Esophagus muscularis mucosa (tissue), 4 donors: ENCODE measurements at regions of chr5 and their contacts with region 1.

Region 1: DNA sequence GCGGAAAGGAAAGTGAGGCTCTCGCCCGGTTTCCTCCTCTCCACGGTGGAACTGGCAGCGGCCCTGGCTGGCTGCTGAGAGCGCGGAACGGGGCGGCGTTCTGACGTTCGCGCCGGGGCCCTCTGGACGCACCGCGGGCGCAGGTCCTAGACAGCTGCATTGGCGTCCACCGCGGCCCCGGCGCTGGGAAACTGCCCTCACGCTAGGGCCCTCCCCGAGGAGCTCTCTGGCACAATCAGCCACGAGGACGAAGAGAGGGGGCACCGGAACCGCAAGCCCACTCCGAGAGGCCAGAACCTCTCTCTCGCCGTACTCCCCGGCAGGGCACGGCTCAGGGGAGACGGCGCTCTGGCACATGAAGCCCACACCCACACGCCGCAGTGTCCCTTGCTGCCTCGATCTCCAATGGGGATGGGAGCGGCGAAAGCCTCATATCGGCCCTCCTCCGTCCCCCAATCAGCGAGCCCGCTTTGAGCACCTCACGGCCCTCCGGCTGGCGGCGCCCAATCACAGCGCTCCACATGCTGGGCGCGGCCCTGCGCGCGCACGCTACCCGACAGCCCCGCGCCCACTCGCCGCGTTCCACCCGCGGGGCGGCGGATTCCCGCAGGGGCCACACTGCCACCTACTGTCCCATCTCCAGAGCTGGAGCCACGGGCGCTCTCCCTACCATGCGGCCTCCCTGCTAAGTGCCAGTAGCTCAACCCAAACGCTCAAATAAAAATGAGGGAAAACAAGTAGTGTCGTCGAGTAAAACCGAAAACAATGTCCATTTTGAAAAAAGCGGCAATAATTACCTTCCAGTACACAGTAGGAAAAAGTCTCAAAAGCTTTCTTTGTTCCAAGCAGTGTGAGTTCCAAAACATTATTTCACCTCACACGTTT is 11.8 kb downstream of the MRPS27 start:
- DNase-seq: peak; percentile 99
- H3K4me3 ChIP-seq: peak overlapping the region; percentile 63 to 80 (median 69)
- H3K27ac ChIP-seq: peak overlapping the region; percentile 86 to 96 (median 92)
- H3K4me1 ChIP-seq: peaks cover 8 to 29% (median 26%) of the 10 kb centered on the region in 4 donors
- H3K27me3 ChIP-seq: no peaks in the 10 kb centered on the region
- CTCF ChIP-seq: peak; percentile 95
- EP300 ChIP-seq: no peak
- POLR2A ChIP-seq: peak; percentile 64

Region 2: GRCh38 chr5:71782771-71783770 is 525.1 kb before region 1 on chr5:
- intact Hi-C with region 1: loop called (anchors 1 kb)
- DNase-seq: no peak
- H3K4me3 ChIP-seq: peak overlapping the region; percentile 32 to 42 (median 36)
- H3K27ac ChIP-seq: peak overlapping the region; percentile 59 to 80 (median 72)
- H3K4me1 ChIP-seq: peaks cover 4 to 24% (median 21%) of the 10 kb centered on the region in 4 donors
- H3K27me3 ChIP-seq: no peaks in the 10 kb centered on the region
- CTCF ChIP-seq: peak; percentile 82 to 89 (median 83)
- EP300 ChIP-seq: no peak
- POLR2A ChIP-seq: no peak

Region 3: DNA sequence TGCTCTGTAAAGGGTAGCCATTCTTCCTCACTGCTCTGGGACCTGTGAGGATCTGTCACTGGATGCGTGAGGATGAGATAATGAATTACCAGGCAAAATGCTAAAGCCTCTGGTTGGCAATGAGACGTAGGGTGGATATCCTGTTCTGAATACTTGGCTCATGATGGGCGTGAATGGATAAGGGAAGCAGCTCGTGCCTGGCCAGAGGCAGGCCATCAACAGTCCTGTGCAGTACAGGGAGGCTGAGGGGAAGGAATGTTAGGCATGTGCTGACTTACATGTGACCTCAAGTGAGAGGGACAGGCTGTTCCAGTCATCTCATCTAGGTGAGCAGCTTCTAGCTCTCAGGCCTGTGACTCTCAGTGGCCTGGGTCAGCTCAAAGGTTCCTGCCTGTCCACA is 416.4 kb before region 1 on chr5:
- intact Hi-C with region 1: loop called (anchors 10 kb)
- DNase-seq: peak; percentile 87
- H3K4me3 ChIP-seq: no peak overlapping the region
- H3K27ac ChIP-seq: peak overlapping the region; percentile 78 to 81 (median 80)
- H3K4me1 ChIP-seq: peaks cover 11 to 37% (median 28%) of the 10 kb centered on the region in 4 donors
- H3K27me3 ChIP-seq: no peaks in the 10 kb centered on the region
- CTCF ChIP-seq: no peak
- EP300 ChIP-seq: peak; percentile 96
- POLR2A ChIP-seq: no peak

Region 4: DNA sequence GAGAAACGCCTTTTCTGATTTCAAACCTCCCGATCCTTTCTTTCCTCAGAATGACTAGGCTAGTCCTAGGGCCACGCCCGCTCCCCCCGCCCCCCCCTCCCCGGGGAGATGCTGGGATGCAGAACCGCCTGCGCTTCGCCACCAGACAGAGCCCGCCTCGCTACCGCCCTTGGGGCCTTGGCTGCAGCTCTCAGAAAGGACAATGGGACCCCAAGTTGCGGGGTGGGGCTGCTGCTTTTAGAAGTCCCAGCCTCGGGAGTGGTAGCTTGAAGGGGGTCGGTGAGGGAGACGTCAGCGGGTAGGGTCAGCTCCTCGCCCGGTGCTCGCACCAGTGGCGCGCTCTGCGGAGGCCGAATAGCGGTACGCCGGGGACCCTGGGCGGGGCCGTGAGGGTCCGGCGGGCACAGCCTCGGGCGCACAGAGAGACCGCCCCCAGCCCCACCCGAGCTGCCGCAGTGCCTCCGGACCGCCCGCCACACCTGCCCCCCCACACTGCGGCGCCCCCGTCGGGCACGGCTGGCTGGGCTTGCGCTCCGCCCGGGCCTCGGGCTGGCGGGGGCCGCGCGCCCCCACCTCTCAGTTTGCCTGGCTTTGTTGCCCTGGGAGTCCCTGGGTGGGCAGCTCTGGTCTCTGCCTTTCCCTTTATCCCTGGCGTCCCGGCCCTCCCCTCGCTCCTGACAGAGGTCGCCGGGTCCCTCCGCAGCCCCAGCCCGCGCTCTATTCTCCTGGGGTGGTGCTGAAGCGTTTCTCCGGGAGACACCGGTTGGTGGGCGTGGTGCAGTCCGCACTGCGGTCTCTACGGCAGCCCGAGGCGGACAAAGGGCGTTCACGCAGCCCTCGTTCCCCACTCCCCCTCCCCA is 199.8 kb before region 1 on chr5:
- intact Hi-C with region 1: loop called (anchors 2 kb)
- DNase-seq: no peak
- H3K4me3 ChIP-seq: peak overlapping the region; percentile 89 to 90 (median 90)
- H3K27ac ChIP-seq: peak overlapping the region; percentile 90 to 93 (median 91)
- H3K4me1 ChIP-seq: peaks cover 7 to 58% (median 50%) of the 10 kb centered on the region in 4 donors
- H3K27me3 ChIP-seq: peaks cover 0 to 3% (median 0%) of the 10 kb centered on the region in 4 donors
- CTCF ChIP-seq: no peak
- EP300 ChIP-seq: no peak
- POLR2A ChIP-seq: no peak

Region 5: DNA sequence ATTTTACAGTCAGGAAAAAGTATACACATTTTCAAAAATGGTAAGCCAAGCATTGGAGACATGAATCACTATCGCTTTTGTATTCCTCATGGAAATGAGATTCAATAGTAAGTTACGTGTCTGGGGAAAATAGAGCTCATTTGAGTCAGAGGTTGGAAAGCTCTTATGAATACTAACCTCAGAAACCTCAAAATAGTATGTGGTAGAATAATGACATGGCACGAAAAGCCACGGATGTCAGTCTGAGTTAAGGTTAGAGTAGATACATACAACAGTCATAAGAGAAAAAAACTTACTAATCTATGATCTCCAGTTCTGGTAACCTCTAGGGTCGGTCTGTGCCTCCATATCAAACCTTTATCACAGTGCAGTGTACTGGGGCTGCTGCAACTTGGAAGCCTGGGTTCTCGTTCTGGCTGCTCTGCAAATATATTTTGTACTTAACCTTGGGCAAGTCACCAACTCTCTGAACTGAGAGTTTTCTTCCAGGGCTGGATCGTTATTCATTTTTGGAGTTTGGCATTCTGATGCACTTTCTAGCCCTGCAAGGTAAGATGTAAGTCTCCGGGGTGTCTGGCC is 169.2 kb before region 1 on chr5:
- intact Hi-C with region 1: loop called (anchors 5 kb)
- DNase-seq: no peak
- H3K4me3 ChIP-seq: no peak overlapping the region
- H3K27ac ChIP-seq: peak overlapping the region; percentile 80 to 85 (median 84)
- H3K4me1 ChIP-seq: peaks cover 33 to 100% (median 97%) of the 10 kb centered on the region in 4 donors
- H3K27me3 ChIP-seq: no peaks in the 10 kb centered on the region
- CTCF ChIP-seq: no peak
- EP300 ChIP-seq: no peak
- POLR2A ChIP-seq: no peak

Region 6: GRCh38 chr5:72185496-72186329 is 122.5 kb before region 1 on chr5:
- intact Hi-C with region 1: loop called (anchors 10 kb)
- DNase-seq: no peak
- H3K4me3 ChIP-seq: no peak overlapping the region
- H3K27ac ChIP-seq: peak overlapping the region; percentile 42 to 67 (median 57)
- H3K4me1 ChIP-seq: peaks cover 8 to 81% (median 75%) of the 10 kb centered on the region in 4 donors
- H3K27me3 ChIP-seq: no peaks in the 10 kb centered on the region
- CTCF ChIP-seq: no peak
- EP300 ChIP-seq: no peak
- POLR2A ChIP-seq: no peak

Region 7: GRCh38 chr5:72355706-72356299 is 47.6 kb after region 1 on chr5:
- intact Hi-C with region 1: no loop called
- DNase-seq: no peak
- H3K4me3 ChIP-seq: no peak overlapping the region
- H3K27ac ChIP-seq: no peak overlapping the region
- H3K4me1 ChIP-seq: no peaks in the 10 kb centered on the region
- H3K27me3 ChIP-seq: no peaks in the 10 kb centered on the region
- CTCF ChIP-seq: peak; percentile 45 to 58 (median 47)
- EP300 ChIP-seq: no peak
- POLR2A ChIP-seq: no peak

Region 8: DNA sequence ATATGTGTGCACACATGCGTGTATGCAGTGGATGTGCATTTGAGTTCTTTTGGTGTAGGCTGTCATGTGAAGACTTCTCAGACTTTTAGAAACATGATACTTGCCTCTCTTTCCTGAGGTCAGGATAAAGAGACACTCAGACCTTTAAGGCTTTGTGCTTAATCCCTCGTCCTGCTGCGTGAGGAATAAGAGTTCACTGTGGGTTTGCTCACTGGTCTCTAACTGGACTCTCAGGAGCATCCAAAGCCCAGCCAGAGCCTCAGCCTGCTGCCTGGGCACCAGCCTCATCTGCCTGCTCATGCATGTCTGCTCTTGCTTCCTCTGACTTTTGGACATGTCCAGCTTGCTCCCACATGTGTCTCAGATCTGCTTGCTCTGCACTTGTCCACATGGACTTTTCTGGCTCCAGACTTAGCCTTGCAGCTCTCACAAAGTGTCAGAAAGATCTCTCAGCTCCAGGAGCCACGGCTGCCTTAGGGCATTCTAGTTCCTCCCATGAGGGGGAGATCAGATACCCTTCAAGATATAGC is 264.1 kb after region 1 on chr5:
- intact Hi-C with region 1: no loop called
- DNase-seq: no peak
- H3K4me3 ChIP-seq: no peak overlapping the region
- H3K27ac ChIP-seq: no peak overlapping the region
- H3K4me1 ChIP-seq: no peaks in the 10 kb centered on the region
- H3K27me3 ChIP-seq: no peaks in the 10 kb centered on the region
- CTCF ChIP-seq: no peak
- EP300 ChIP-seq: no peak
- POLR2A ChIP-seq: no peak